ENCODE measurements at regions of chr20 and their contacts with region 1.

Region 1: DNA sequence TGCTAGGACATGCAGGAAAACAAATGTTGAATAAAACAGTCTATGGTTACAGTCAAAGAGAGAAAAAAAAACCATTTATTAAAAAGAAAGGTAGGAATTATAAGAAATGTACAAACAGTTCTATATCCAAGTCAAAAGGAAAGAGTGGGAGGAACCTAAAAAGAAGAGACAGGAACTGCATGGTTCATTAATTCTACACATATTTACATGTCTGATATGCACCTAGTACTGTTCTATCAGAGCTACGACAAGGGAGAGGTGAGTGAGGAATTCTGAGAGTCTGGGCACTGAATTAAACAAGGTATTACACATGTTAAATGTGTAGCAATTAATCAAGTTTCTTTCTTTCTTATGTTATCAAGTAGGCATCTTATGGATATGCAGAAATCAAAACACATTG is 41.9 kb downstream of the SYCP2 start:
- DNase-seq: no peak
- H3K4me3 ChIP-seq: no peak overlapping the region
- H3K4me3 Mint-ChIP-seq: no peak overlapping the region
- H3K27ac Mint-ChIP-seq: no peak overlapping the region
- H3K4me1 ChIP-seq: peaks cover 10% of the 10 kb centered on the region; the same call in 1 of the 2 replicates
- H3K4me1 Mint-ChIP-seq: no peaks in the 10 kb centered on the region
- H3K27me3 ChIP-seq: no peaks in the 10 kb centered on the region
- H3K27me3 Mint-ChIP-seq: no peaks in the 10 kb centered on the region
- CTCF ChIP-seq: no peak

Region 2: DNA sequence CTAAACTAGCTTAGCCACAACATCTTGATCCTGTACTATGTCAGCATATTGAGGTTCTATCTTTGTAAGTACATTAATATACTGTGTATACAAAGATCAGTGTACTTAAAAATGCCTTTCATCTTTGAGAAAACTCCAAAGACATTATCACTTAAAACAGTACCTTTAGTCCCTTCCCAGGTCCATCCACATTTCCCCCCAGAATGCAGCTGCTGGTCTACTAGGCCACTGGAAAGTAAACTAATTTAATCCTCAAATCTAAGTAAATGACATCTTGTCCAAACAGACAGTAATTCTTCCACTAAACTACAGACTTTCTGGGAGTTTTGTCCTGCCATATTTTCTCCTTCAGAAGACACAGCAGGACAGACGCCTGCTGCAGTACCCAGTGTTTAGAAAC is 26.9 kb before region 1 on chr20:
- CTCF ChIA-PET with region 1: no interaction called
- POLR2A ChIA-PET with region 1: no interaction called
- intact Hi-C with region 1: loop called (anchors 2 kb)
- DNase-seq: peak; percentile 77 to 84
- H3K4me3 ChIP-seq: no peak overlapping the region
- H3K4me3 Mint-ChIP-seq: peak overlapping the region; percentile 23
- H3K27ac Mint-ChIP-seq: no peak overlapping the region
- H3K4me1 ChIP-seq: peaks cover 15% of the 10 kb centered on the region
- H3K4me1 Mint-ChIP-seq: peaks cover 8% of the 10 kb centered on the region
- H3K27me3 ChIP-seq: no peaks in the 10 kb centered on the region
- H3K27me3 Mint-ChIP-seq: peaks cover 3% of the 10 kb centered on the region
- CTCF ChIP-seq: no peak